Aorta (tissue), 5 donors: ENCODE measurements at regions of chr2 and their contacts with region 1.

Region 1: GRCh38 chr2:102442967-102443828 is 20.2 kb downstream of the IL18RAP start:
- DNase-seq: no peak
- ATAC-seq: no peak
- H3K4me3 ChIP-seq: no peak overlapping the region
- H3K27ac ChIP-seq: no peak overlapping the region
- H3K4me1 ChIP-seq: no peaks in the 10 kb centered on the region
- H3K27me3 ChIP-seq: no peaks in the 10 kb centered on the region

Region 2: DNA sequence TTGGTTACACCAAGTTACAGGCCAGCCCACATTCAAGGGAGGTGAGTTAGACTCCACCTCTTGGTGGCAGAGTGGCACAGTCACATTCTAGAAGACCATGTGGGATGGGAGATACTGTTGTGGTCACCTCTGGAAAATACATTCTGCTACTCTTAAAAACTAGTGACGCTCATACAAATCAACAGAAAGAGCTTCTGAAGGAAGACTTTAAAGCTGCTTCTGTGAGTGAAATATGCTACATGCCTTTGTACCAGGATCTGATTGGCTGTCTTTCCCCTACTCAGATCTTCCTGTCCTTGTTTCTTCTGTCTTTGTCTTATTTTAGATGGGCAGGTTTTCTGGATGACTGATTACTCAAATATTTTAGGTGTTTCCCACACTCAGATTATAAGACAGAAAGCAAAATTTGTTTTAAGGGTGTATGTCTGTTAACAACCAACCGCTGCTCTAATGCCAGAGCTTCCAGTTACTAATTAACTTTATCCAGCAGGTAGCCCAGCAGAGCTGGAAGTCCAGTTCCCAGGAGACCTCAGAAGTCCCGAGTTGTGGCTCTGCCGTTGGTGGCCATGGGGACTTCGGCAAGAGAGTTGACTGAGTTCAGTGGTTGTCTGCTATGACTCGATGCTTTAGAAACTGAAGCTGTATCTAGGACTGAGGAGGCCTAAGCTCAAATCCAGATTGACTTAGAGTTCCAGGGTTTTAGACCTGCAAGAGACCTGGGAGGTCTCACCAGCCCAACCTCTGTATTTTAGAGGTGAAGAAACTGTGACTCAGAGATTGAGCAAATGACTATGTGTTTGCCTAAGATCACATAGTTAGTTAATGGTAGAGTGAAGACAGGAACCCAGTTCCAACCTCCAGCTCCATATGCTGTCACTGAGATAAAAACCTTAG is 444.1 kb before region 1 on chr2:
- intact Hi-C with region 1: loop called in 1 of 2 experiments (anchors 10 kb)
- DNase-seq: no peak
- ATAC-seq: no peak
- H3K4me3 ChIP-seq: no peak overlapping the region
- H3K27ac ChIP-seq: no peak overlapping the region
- H3K4me1 ChIP-seq: no peaks in the 10 kb centered on the region
- H3K27me3 ChIP-seq: no peaks in the 10 kb centered on the region

Region 3: GRCh38 chr2:102992607-102993006 is 549.4 kb after region 1 on chr2:
- intact Hi-C with region 1: no loop called
- DNase-seq: no peak
- ATAC-seq: no peak
- H3K4me3 ChIP-seq: no peak overlapping the region
- H3K27ac ChIP-seq: no peak overlapping the region
- H3K4me1 ChIP-seq: no peaks in the 10 kb centered on the region
- H3K27me3 ChIP-seq: peaks cover 0 to 2% of the 10 kb centered on the region in 2 donors